ENCODE measurements at regions of chr3 and their contacts with region 1.

Region 1: DNA sequence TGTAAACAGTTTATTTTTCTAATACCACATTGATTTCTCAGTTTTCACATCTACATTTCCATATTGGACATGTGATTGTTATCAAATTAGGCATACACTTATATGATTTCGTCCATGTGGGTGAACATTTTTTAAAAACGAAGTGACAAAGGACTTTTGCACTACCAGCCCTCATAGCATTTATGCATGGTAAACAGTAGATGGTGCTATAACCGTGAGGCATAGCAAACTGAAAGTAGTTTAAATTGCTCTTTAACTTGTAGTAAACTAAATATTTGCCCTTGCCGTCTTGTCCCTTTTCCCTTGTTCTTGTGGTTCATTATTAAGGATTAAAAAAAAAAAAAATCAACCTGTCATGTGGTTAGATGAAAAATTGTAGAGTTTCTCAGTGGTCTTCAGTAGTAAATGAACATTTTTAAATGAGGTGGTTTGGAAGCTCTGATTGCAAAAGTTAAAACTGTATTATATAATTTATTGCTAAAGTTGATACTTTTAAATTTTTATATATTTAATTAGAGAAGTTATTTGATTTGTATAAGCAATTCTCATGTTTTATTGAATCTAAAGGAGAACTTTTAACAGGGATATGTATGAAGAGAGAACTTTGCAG is 24.0 kb downstream of the STX19 start:
- DNase-seq: no peak
- H3K4me3 Mint-ChIP-seq: peak overlapping the region; percentile 47
- H3K27ac Mint-ChIP-seq: no peak overlapping the region
- H3K4me1 Mint-ChIP-seq: peaks cover 4% of the 10 kb centered on the region
- H3K27me3 Mint-ChIP-seq: no peaks in the 10 kb centered on the region

Region 2: GRCh38 chr3:93961489-93961888 is 42.9 kb before region 1 on chr3:
- CTCF ChIA-PET with region 1: no interaction called
- DNase-seq: no peak
- H3K4me3 Mint-ChIP-seq: no peak overlapping the region
- H3K27ac Mint-ChIP-seq: no peak overlapping the region
- H3K4me1 Mint-ChIP-seq: no peaks in the 10 kb centered on the region
- H3K27me3 Mint-ChIP-seq: peaks cover 4% of the 10 kb centered on the region

Region 3: DNA sequence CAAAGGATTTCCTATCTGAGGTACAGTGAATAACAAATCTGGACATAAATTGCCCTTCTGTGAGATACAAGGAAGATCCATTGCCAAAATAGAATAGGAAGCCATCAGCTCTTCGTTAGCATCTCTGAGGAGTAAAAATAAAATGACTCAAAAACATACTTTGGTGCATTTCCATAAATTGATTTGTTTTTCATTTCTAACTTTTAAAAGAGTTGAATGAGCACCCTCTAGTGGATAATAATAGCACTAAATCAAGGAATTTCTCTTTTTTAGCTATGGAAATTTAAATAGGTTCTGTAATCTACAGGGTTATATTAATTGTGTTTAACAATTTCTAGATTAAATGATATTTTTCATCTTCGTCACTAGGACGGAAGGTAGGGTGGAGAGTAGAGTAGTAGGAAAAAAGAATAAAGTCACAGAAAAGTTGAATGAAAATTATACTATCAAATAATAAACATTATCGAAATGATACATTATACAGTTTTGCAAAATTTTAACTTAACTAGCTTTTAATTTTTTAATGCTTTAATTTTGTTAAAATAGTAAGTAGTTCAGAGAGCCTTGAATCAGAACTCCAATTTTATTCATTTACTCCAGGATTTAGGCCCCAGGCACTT is 64.9 kb after region 1 on chr3:
- CTCF ChIA-PET with region 1: interaction called, 21 read pairs
- DNase-seq: no peak
- H3K4me3 Mint-ChIP-seq: no peak overlapping the region
- H3K27ac Mint-ChIP-seq: no peak overlapping the region
- H3K4me1 Mint-ChIP-seq: peaks cover 57% of the 10 kb centered on the region
- H3K27me3 Mint-ChIP-seq: no peaks in the 10 kb centered on the region

Region 4: DNA sequence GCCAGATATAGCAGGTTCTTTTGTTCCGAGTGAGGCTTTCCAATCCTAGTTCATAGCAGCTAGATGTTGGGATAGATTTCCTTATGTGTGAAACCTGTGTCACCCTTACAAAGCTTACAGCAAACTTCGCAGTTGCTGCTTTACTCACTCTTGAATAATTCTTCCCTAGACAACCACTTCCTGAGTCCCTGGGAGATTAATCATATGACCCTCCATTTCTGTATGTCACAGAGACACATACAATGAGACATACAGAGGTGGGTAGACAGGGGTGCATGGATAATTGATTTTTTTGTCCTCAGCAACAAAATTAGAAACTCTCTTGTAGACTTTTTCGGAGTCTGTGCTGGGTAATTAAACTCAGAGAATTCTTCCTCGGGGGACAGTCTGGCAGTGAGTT is 221.7 kb after region 1 on chr3:
- CTCF ChIA-PET with region 1: no interaction called
- DNase-seq: no peak
- H3K4me3 Mint-ChIP-seq: no peak overlapping the region
- H3K27ac Mint-ChIP-seq: no peak overlapping the region
- H3K4me1 Mint-ChIP-seq: no peaks in the 10 kb centered on the region
- H3K27me3 Mint-ChIP-seq: no peaks in the 10 kb centered on the region

Measured in activated naive CD4-positive, alpha-beta T cell treated with anti-CD3 and anti-CD28 coated beads, Interleukin-2, amount 10 ng/mL, durations not matched to agents 7 days and 5 days (primary cell).